OCI-LY7 (cell line): ENCODE measurements at regions of chr3 and their contacts with region 1.

Region 1: DNA sequence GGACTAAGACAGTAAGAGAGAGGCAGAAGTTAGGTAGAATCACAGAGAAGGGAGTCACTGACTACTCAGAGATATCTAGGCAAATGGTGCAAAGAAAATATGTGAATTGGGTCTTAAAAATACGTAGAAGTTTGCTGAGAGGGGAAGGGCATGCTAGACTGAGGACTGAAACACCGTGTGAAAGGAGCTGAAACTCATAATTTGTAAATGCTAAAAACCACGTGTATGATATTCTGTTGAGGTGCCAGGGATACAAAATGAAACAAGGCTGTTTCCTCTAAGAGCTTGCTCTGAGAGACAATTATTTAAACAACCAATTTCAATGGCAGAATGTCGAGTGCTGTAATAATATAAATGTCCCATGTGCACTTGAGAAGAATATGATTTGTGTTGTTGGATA is 47.2 kb downstream of the NCK1 start:
- DNase-seq: no peak
- H3K4me3 ChIP-seq: no peak overlapping the region
- H3K27ac ChIP-seq: peak overlapping the region; percentile 25
- H3K4me1 ChIP-seq: peaks cover 41% of the 10 kb centered on the region
- CTCF ChIP-seq: no peak

Region 2: GRCh38 chr3:136725468-136725867 is 183.7 kb before region 1 on chr3:
- CTCF ChIA-PET with region 1: no interaction called
- POLR2A ChIA-PET with region 1: no interaction called
- intact Hi-C with region 1: no loop called
- DNase-seq: no peak
- H3K4me3 ChIP-seq: no peak overlapping the region
- H3K27ac ChIP-seq: no peak overlapping the region
- H3K4me1 ChIP-seq: peaks cover 8% of the 10 kb centered on the region
- CTCF ChIP-seq: no peak

Region 3: DNA sequence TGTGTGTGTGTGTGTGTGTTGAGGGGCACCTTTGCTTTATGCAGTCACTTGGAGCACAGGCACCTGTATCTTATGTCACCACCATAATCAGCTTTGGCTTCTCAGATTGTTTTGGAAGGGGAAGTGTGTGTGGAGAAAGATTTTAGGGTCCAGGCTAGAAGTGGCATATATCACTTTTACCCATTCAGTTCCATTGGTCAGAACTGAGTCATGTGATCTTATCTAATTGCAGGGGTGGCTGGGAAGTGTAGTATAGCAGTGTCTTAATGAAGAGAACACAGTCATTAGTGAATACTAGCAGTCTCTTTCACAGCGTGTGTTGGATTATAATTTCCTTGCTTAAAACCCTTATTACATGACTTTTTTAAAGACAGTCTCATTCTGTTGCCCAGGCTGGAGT is 26.6 kb before region 1 on chr3:
- CTCF ChIA-PET with region 1: no interaction called
- POLR2A ChIA-PET with region 1: interaction called, 11 read pairs
- intact Hi-C with region 1: no loop called
- DNase-seq: peak; percentile 67
- H3K4me3 ChIP-seq: peak overlapping the region; percentile 52
- H3K27ac ChIP-seq: peak overlapping the region; percentile 96
- H3K4me1 ChIP-seq: peaks cover 71% of the 10 kb centered on the region
- CTCF ChIP-seq: no peak

Region 4: DNA sequence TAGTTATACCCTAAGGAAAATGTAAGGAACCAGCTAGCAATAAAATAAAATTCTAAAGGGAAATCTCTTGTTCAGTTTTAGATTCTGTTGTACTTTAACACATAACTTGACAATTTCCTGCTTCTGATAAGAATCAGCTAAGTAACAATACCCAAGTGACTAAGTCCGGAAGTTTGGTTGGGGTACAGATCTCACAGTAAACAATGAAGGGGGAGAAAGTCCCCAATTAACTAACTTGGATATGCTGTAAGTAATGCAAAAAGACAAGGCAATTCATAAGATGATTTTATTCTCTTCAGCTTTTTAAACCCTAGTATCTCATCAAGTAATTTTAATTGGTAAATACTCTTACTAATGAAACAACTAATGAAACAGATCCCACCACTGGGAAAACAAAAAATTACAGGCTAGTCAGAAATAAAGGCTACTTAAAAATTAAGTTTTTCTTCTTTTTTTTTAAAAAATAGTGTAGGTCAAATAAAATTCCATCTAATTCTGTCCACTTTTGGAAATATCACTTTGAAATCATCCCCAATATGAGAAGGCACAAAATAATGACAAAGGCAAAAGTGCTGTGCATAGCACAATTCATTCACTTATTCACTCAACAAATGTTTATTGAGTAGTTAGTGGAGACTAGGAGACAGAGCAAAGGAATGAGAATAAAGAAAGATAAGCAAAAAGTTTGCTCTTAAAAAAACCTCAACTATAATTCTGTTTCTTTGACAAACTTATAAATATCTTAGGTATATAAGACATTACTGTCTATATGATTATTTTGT is 10.8 kb after region 1 on chr3:
- CTCF ChIA-PET with region 1: no interaction called
- POLR2A ChIA-PET with region 1: interaction called, 14 read pairs
- intact Hi-C with region 1: no loop called
- DNase-seq: no peak
- H3K4me3 ChIP-seq: no peak overlapping the region
- H3K27ac ChIP-seq: no peak overlapping the region
- H3K4me1 ChIP-seq: peaks cover 15% of the 10 kb centered on the region
- CTCF ChIP-seq: no peak

Region 5: GRCh38 chr3:137205394-137206045 is 296.3 kb after region 1 on chr3:
- CTCF ChIA-PET with region 1: no interaction called
- POLR2A ChIA-PET with region 1: no interaction called
- intact Hi-C with region 1: no loop called
- DNase-seq: no peak
- H3K4me3 ChIP-seq: no peak overlapping the region
- H3K27ac ChIP-seq: no peak overlapping the region
- H3K4me1 ChIP-seq: no peaks in the 10 kb centered on the region
- CTCF ChIP-seq: no peak